Activated naive CD8-positive, alpha-beta T cell treated with anti-CD3 and anti-CD28 coated beads, Interleukin-2, amount 10 ng/mL, durations not matched to agents 7 days and 5 days (primary cell): ENCODE measurements at regions of chr10 and their contacts with region 1.

Region 1: GRCh38 chr10:102713814-102714620 is at the start of gene ARL3:
- DNase-seq: peak; percentile 93
- ATAC-seq: peak; percentile 94
- H3K4me3 Mint-ChIP-seq: peak within 1 kb of the TSS; percentile 94
- H3K27ac Mint-ChIP-seq: peak within 1 kb of the TSS; percentile 89
- H3K4me1 Mint-ChIP-seq: peaks cover 44% of the 10 kb centered on the region
- H3K27me3 Mint-ChIP-seq: no peaks in the 10 kb centered on the region
- total RNA-seq, gene ARL3: 4.6 TPM

Region 2: GRCh38 chr10:102150970-102151773 is 562.8 kb before region 1 on chr10:
- POLR2A ChIA-PET with region 1: no interaction called
- DNase-seq: no peak
- ATAC-seq: no peak
- H3K4me3 Mint-ChIP-seq: peak overlapping the region; percentile 88
- H3K27ac Mint-ChIP-seq: peak overlapping the region; percentile 86
- H3K4me1 Mint-ChIP-seq: peaks cover 26% of the 10 kb centered on the region
- H3K27me3 Mint-ChIP-seq: no peaks in the 10 kb centered on the region

Region 3: GRCh38 chr10:102652170-102652916 is 61.7 kb before region 1 on chr10:
- POLR2A ChIA-PET with region 1: interaction called, 14 read pairs
- DNase-seq: no peak
- ATAC-seq: peak; percentile 44
- H3K4me3 Mint-ChIP-seq: peak overlapping the region; percentile 85
- H3K27ac Mint-ChIP-seq: peak overlapping the region; percentile 99
- H3K4me1 Mint-ChIP-seq: peaks cover 60% of the 10 kb centered on the region
- H3K27me3 Mint-ChIP-seq: no peaks in the 10 kb centered on the region

Region 4: GRCh38 chr10:102660888-102661657 is 52.9 kb before region 1 on chr10:
- POLR2A ChIA-PET with region 1: interaction called, 23 read pairs
- DNase-seq: peak; percentile 83
- ATAC-seq: peak; percentile 84
- H3K4me3 Mint-ChIP-seq: peak overlapping the region; percentile 69
- H3K27ac Mint-ChIP-seq: peak overlapping the region; percentile 91
- H3K4me1 Mint-ChIP-seq: peaks cover 36% of the 10 kb centered on the region
- H3K27me3 Mint-ChIP-seq: no peaks in the 10 kb centered on the region

Region 5: DNA sequence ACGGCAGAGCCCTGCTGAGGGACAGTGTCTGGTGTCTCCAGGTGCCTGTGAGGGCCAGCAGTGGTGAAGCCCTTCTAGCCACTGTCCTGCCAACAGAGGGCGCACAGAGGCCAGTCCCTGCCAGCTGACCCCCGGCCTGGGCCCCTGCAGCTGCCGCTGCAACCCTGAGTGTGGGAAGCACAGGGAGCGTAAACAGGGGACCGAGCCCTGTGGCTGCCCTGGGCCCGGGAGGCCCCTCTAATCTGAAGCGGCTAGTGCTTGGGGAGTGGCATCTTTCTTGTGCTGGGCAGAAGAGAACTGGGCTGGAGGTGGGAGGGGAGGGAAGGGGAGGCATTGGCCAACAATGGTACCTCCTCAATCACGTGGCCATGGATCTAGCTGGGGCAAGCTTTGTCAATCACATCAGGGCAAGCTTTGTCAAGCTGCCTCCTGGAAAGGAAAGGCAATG is 35.2 kb before region 1 on chr10:
- POLR2A ChIA-PET with region 1: interaction called, 40 read pairs
- DNase-seq: no peak
- ATAC-seq: no peak
- H3K4me3 Mint-ChIP-seq: no peak overlapping the region
- H3K27ac Mint-ChIP-seq: no peak overlapping the region
- H3K4me1 Mint-ChIP-seq: peaks cover 42% of the 10 kb centered on the region
- H3K27me3 Mint-ChIP-seq: no peaks in the 10 kb centered on the region

Region 6: GRCh38 chr10:102691285-102692066 is 22.5 kb before region 1 on chr10:
- POLR2A ChIA-PET with region 1: no interaction called
- DNase-seq: no peak
- ATAC-seq: no peak
- H3K4me3 Mint-ChIP-seq: no peak overlapping the region
- H3K27ac Mint-ChIP-seq: no peak overlapping the region
- H3K4me1 Mint-ChIP-seq: no peaks in the 10 kb centered on the region
- H3K27me3 Mint-ChIP-seq: no peaks in the 10 kb centered on the region

Region 7: GRCh38 chr10:102752934-102753664 is 39.1 kb after region 1 on chr10:
- POLR2A ChIA-PET with region 1: no interaction called
- DNase-seq: no peak
- ATAC-seq: peak; percentile 72
- H3K4me3 Mint-ChIP-seq: no peak overlapping the region
- H3K27ac Mint-ChIP-seq: no peak overlapping the region
- H3K4me1 Mint-ChIP-seq: peaks cover 35% of the 10 kb centered on the region
- H3K27me3 Mint-ChIP-seq: no peaks in the 10 kb centered on the region